A549 (cell line): ENCODE measurements at regions of chr2 and their contacts with region 1.

Region 1: GRCh38 chr2:183117226-183117625 is 7.0 kb upstream of the NUP35 start:
- DNase-seq: no peak
- ATAC-seq: no peak
- H3K4me3 ChIP-seq: no peak overlapping the region
- H3K27ac ChIP-seq: no peak overlapping the region
- H3K4me1 ChIP-seq: no peaks in the 10 kb centered on the region
- CTCF ChIP-seq: no peak
- EP300 ChIP-seq: no peak
- POLR2A ChIP-seq: no peak
- RAD21 ChIP-seq: no peak

Region 2: DNA sequence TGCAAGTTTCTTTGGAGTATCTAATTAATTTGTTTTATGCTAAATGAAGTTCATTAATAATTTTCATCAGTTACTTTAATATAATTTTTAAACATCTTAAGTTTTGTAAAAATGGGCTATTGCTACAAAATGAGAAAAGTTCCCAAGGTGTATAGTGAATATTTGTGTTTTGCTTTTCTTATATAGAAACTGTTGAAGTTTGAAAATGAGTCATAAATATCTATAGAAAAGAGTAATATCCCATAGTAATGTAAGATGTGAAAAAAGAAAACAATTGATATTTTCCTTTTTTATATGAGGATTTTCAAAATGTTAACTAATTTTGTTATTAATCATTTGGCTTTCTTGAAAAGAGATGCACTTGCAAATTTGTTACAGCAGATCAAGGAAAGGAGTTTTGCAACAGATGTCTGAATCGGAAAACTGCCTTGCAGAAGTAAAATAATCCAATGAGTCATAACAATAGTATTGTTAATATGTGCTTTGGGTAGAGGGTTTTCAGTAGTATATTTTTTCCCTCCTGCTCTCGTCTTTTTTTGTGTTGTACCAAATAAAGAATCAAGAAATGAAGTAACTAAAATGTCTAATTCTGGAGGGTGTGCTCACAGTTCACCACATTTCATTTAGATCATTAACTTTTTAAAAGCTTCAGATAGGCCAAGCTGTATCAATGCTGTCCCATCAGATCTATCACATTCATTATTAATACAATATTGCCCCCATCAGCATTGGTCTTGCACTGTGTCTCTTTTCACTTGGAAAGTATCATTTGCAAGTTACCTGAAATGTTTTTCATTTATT is 23.2 kb before region 1 on chr2:
- CTCF ChIA-PET with region 1: no interaction called
- POLR2A ChIA-PET with region 1: interaction called, 17 read pairs
- DNase-seq: no peak
- ATAC-seq: peak; percentile 67 to 71
- H3K4me3 ChIP-seq: no peak overlapping the region
- H3K27ac ChIP-seq: no peak overlapping the region
- H3K4me1 ChIP-seq: peaks cover 13% of the 10 kb centered on the region; the same call in 2 of the 3 replicates
- CTCF ChIP-seq: peak; percentile 25; the same call in 2 of the 3 replicates
- EP300 ChIP-seq: no peak
- POLR2A ChIP-seq: no peak
- RAD21 ChIP-seq: peak; percentile 20 to 44; a peak in 2 of 5 replicates

Region 3: GRCh38 chr2:183105402-183106134 is 11.7 kb before region 1 on chr2:
- CTCF ChIA-PET with region 1: no interaction called
- POLR2A ChIA-PET with region 1: no interaction called
- DNase-seq: peak in 1 of 2 experiments; percentile 65
- ATAC-seq: peak; percentile 71 to 73; a peak in 5 of 6 replicates
- H3K4me3 ChIP-seq: no peak overlapping the region
- H3K27ac ChIP-seq: peak overlapping the region; percentile 57 to 78; a peak in 5 of 6 replicates
- H3K4me1 ChIP-seq: peaks cover 12% of the 10 kb centered on the region
- CTCF ChIP-seq: no peak
- EP300 ChIP-seq: no peak
- POLR2A ChIP-seq: no peak
- RAD21 ChIP-seq: no peak

Region 4: GRCh38 chr2:183214680-183215079 is 97.5 kb after region 1 on chr2:
- CTCF ChIA-PET with region 1: no interaction called
- POLR2A ChIA-PET with region 1: no interaction called
- DNase-seq: no peak
- ATAC-seq: no peak
- H3K4me3 ChIP-seq: no peak overlapping the region
- H3K27ac ChIP-seq: no peak overlapping the region
- H3K4me1 ChIP-seq: no peaks in the 10 kb centered on the region
- CTCF ChIP-seq: no peak
- EP300 ChIP-seq: no peak
- POLR2A ChIP-seq: no peak
- RAD21 ChIP-seq: no peak